ENCODE measurements at regions of chr15 and their contacts with region 1.

Region 1: GRCh38 chr15:33608714-33609113 is 297.9 kb downstream of the RYR3 start:
- DNase-seq: no peak
- ATAC-seq: no peak
- H3K4me3 ChIP-seq: no peak overlapping the region
- H3K27ac ChIP-seq: no peak overlapping the region
- H3K4me1 ChIP-seq: no peaks in the 10 kb centered on the region
- H3K27me3 ChIP-seq: no peaks in the 10 kb centered on the region

Region 2: GRCh38 chr15:33309602-33310276 is 299.0 kb before region 1 on chr15:
- intact Hi-C with region 1: loop called (anchors 2 to 5 kb)
- DNase-seq: peak; percentile 52 to 82
- ATAC-seq: peak; percentile 79
- H3K4me3 ChIP-seq: no peak overlapping the region
- H3K27ac ChIP-seq: no peak overlapping the region
- H3K4me1 ChIP-seq: no peaks in the 10 kb centered on the region
- H3K27me3 ChIP-seq: no peaks in the 10 kb centered on the region

Region 3: GRCh38 chr15:33539825-33540573 is 68.7 kb before region 1 on chr15:
- intact Hi-C with region 1: loop called in 1 of 2 experiments (anchors 10 kb)
- DNase-seq: no peak
- ATAC-seq: no peak
- H3K4me3 ChIP-seq: no peak overlapping the region
- H3K27ac ChIP-seq: no peak overlapping the region
- H3K4me1 ChIP-seq: peaks cover 0 to 2% of the 10 kb centered on the region in 2 donors
- H3K27me3 ChIP-seq: no peaks in the 10 kb centered on the region